ENCODE measurements at regions of chr14 and their contacts with region 1.

Region 1: DNA sequence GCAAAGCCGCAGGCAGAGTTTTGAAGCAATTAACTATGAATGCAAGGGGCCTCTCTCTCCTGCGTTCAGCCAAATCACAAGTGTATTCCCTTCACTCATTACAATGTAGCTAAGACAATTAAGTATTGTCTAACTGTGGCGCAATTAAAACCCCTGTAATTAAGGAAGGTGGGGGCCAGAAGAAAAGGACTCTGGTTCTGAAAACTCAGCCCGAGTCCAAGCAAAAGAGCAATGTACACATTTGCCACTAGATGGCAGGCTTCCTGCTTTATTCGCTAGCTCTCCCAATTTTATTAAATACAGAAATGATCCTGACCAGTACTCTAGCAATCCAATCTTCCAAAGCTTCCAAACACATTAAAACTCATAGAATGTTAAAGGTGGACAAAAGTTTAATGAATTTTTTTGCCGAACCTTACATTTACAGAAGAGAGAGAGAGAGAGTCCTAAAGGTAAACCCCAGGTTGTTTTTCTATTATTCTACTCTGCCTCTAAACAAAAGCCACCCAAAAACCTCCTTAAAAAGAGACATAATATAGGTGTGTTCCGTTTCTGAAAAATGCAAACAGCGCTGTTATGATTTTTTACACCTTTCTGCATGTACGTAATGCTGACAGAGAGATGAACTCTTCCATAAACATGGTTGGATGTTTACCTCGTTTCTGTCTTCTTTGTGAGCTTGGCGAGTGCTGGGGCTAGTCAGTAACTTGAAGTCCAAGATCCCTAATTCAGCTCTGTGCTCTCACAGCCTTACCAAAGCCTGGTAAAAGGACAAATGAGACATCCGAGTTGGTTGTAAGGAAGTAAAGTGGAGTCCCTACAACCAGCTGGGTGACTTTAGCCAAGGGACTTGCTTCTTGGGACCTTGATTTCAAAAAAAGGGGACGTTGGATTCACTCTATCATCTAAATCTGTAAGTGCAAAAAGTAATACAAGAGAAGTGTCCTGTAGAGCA is 50.9 kb upstream of the VASH1 start:
- DNase-seq: peak; percentile 63
- H3K4me3 ChIP-seq: no peak overlapping the region
- H3K27ac ChIP-seq: no peak overlapping the region
- H3K4me1 ChIP-seq: no peaks in the 10 kb centered on the region
- H3K27me3 ChIP-seq: no peaks in the 10 kb centered on the region
- CTCF ChIP-seq: peak; percentile 71 to 72
- POLR2A ChIP-seq: no peak

Region 2: DNA sequence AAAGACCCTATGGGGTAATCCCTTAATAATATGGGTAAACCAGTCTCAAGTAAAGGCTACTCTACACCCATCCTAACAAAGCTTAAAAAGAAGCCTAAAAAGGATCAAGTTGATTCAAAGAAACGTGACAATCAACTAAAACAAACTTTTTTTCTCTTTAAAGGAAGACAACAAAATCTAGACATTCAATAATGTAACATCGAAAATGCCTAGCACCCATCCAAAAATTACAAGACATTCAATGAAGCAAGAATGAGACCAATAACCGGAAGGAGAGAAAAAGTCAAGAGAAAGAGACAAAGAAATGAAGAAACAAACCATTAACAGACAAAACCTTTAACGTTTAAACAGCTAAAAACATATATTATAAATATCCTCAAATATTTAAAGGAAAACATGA is 92.9 kb before region 1 on chr14:
- CTCF ChIA-PET with region 1: no interaction called
- POLR2A ChIA-PET with region 1: no interaction called
- dilution Hi-C with region 1: no loop called
- intact Hi-C with region 1: no loop called
- DNase-seq: no peak
- H3K4me3 ChIP-seq: no peak overlapping the region
- H3K27ac ChIP-seq: no peak overlapping the region
- H3K4me1 ChIP-seq: no peaks in the 10 kb centered on the region
- H3K27me3 ChIP-seq: peaks cover 0 to 2% of the 10 kb centered on the region in 2 experiments
- CTCF ChIP-seq: no peak
- POLR2A ChIP-seq: no peak

Region 3: GRCh38 chr14:76726551-76726970 is 16.2 kb after region 1 on chr14:
- CTCF ChIA-PET with region 1: interaction called, 14 read pairs
- POLR2A ChIA-PET with region 1: interaction called, 4 read pairs
- dilution Hi-C with region 1: no loop called
- intact Hi-C with region 1: no loop called
- DNase-seq: no peak
- H3K4me3 ChIP-seq: no peak overlapping the region
- H3K27ac ChIP-seq: no peak overlapping the region
- H3K4me1 ChIP-seq: peaks cover 3% of the 10 kb centered on the region
- H3K27me3 ChIP-seq: peaks cover 8 to 12% of the 10 kb centered on the region in 2 experiments
- CTCF ChIP-seq: no peak
- POLR2A ChIP-seq: no peak

Region 4: DNA sequence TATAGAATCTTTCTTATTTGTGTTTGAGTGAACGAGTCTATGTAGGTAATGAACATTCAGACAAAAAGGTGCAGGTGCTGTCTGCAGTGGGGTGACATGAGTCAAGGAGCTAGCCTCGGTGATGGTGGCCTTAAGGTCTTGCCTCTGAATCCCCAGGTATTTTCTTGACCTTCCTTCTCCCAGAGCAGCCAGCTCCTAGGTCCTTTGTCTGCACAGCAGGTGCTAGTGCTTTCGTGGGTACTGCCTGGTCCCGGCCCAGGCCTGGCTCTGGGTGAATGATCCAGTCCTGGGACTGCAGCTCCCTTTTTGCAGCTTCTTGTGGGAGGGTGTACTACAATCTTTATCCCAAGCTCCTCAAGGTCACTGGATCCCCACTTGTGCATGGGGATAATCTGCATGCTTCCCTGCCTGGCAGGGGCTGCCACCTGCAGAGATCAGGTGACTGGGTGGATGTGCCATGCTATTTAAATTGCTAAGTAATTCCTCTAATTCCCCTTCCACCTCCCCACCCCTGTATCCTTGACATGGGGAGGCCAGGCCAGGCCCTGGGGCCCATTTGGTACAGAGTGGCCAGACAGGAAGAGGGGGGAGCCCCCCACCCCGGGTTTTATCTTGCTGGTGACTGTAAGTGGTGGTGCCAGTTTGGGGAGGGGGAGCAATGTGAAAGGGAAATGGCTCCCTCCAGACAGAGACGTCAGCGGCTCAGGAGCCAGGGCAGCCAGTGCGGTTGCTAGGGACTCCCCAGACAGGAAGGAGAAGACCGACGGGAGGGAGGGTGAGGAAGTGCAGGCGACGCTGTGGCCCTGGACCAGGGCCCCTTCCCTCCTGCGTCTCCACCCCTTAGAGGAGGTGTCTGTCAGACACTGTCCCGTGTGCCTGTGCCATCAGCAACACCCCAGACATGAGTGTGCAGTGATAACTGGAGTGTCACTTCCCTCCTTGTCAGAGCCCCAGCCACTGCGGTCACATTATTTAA is 57.6 kb after region 1 on chr14:
- CTCF ChIA-PET with region 1: interaction called, 24 read pairs
- POLR2A ChIA-PET with region 1: no interaction called
- dilution Hi-C with region 1: no loop called
- intact Hi-C with region 1: loop called (anchors 1 kb)
- DNase-seq: peak; percentile 69
- H3K4me3 ChIP-seq: no peak overlapping the region
- H3K27ac ChIP-seq: peak overlapping the region; percentile 54
- H3K4me1 ChIP-seq: peaks cover 42% of the 10 kb centered on the region
- H3K27me3 ChIP-seq: no peaks in the 10 kb centered on the region
- CTCF ChIP-seq: no peak
- POLR2A ChIP-seq: peak; percentile 22

Region 5: GRCh38 chr14:76784266-76785264 is 74.2 kb after region 1 on chr14:
- CTCF ChIA-PET with region 1: interaction called, 557 read pairs
- POLR2A ChIA-PET with region 1: interaction called, 5 read pairs
- dilution Hi-C with region 1: no loop called
- intact Hi-C with region 1: loop called (anchors 1 kb)
- DNase-seq: peak; percentile 90
- H3K4me3 ChIP-seq: no peak overlapping the region
- H3K27ac ChIP-seq: no peak overlapping the region
- H3K4me1 ChIP-seq: no peaks in the 10 kb centered on the region
- H3K27me3 ChIP-seq: no peaks in the 10 kb centered on the region
- CTCF ChIP-seq: peak; percentile 96 to 97
- POLR2A ChIP-seq: no peak

Region 6: DNA sequence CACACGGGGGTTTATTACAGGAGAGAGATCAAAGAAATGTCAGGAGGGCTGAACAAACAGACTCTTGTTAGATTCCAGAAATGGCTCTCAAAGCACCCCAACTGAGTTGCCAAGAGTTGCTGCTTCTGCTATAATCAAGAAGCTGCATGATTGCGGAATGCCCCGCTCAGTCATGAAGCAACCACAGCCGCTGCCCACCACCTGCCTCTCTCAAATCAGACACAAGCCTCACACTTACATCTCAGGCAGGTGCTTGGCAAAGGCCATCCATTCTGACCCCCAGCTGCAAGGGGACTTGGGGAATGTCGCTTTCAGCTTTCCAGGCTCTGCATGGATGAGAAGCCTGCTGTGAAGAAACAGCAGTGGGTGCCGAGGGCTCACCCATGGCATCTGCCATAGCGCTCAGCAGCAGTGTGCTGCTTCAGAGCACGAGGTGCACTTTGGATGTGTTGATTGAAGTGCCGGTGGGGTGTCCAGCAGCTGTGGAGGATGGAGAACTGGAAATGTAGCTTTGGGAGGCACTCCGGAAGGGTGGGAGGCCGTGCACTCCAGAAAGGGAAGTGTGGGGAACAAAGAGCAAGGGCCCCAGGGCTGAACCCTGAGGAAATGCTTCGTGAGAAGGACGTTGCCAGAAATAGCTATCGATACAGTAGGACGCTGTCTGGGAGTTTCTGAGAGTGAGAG is 153.5 kb after region 1 on chr14:
- CTCF ChIA-PET with region 1: interaction called, 19 read pairs
- POLR2A ChIA-PET with region 1: no interaction called
- dilution Hi-C with region 1: no loop called
- intact Hi-C with region 1: no loop called
- DNase-seq: peak; percentile 43
- H3K4me3 ChIP-seq: no peak overlapping the region
- H3K27ac ChIP-seq: no peak overlapping the region
- H3K4me1 ChIP-seq: peaks cover 12% of the 10 kb centered on the region
- H3K27me3 ChIP-seq: peaks cover 3% of the 10 kb centered on the region in 2 experiments
- CTCF ChIP-seq: no peak
- POLR2A ChIP-seq: no peak

Region 7: GRCh38 chr14:77097700-77098528 is 387.6 kb after region 1 on chr14 and contains the start of gene CIPC:
- CTCF ChIA-PET with region 1: interaction called, 4 read pairs
- POLR2A ChIA-PET with region 1: no interaction called
- dilution Hi-C with region 1: no loop called
- intact Hi-C with region 1: loop called (anchors 10 kb)
- DNase-seq: peak; percentile 99
- H3K4me3 ChIP-seq: peak within 1 kb of the TSS; percentile 30 to 72 (median 66)
- H3K27ac ChIP-seq: peak within 1 kb of the TSS; percentile 57
- H3K4me1 ChIP-seq: peaks cover 27% of the 10 kb centered on the region
- H3K27me3 ChIP-seq: no peaks in the 10 kb centered on the region
- CTCF ChIP-seq: no peak
- POLR2A ChIP-seq: no peak
- total RNA-seq, gene CIPC: 17.4 and 17.7 TPM in 2 replicates